H1 (cell line): ENCODE measurements at regions of chr14 and their contacts with region 1.

Region 1: GRCh38 chr14:28375295-28375694 is 391.3 kb upstream of the FOXG1 start:
- DNase-seq: peak; percentile 25 to 54
- H3K4me3 ChIP-seq: no peak overlapping the region
- H3K27ac ChIP-seq: no peak overlapping the region
- H3K4me1 ChIP-seq: no peaks in the 10 kb centered on the region
- H3K27me3 ChIP-seq: no peaks in the 10 kb centered on the region
- CTCF ChIP-seq: peak in 2 of 3 experiments; percentile 69 to 78; a peak in 3 of 4 replicates
- EP300 ChIP-seq: no peak
- POLR2A ChIP-seq: no peak
- RAD21 ChIP-seq: peak; percentile 66 to 73

Region 2: GRCh38 chr14:28280997-28281598 is 94.2 kb before region 1 on chr14:
- CTCF ChIA-PET with region 1: no interaction called
- POLR2A ChIA-PET with region 1: no interaction called
- DNase-seq: no peak
- H3K4me3 ChIP-seq: no peak overlapping the region
- H3K27ac ChIP-seq: no peak overlapping the region
- H3K4me1 ChIP-seq: no peaks in the 10 kb centered on the region
- H3K27me3 ChIP-seq: no peaks in the 10 kb centered on the region
- CTCF ChIP-seq: no peak
- EP300 ChIP-seq: no peak
- POLR2A ChIP-seq: no peak
- RAD21 ChIP-seq: no peak

Region 3: DNA sequence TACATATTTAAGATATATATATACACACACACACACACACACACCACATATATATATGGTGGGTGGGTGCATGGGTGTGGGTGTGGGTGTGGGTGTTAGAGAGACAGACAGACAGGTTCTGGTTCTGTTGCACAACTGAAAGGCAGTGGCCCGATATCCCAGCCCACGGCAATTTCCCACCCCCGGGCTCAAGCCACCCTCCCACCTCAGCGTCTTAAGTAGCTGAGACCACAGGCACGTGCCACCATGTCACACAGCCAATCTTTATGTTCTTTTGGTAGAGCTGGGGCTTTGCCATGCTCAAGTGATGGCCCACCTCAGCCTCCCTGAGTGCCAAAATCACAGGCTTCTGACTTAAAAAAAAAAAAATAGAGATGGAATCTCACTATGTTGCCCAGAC is 26.5 kb before region 1 on chr14:
- CTCF ChIA-PET with region 1: interaction called, 12 read pairs
- POLR2A ChIA-PET with region 1: no interaction called
- DNase-seq: no peak
- H3K4me3 ChIP-seq: no peak overlapping the region
- H3K27ac ChIP-seq: no peak overlapping the region
- H3K4me1 ChIP-seq: no peaks in the 10 kb centered on the region
- H3K27me3 ChIP-seq: no peaks in the 10 kb centered on the region
- CTCF ChIP-seq: no peak
- EP300 ChIP-seq: no peak
- POLR2A ChIP-seq: no peak
- RAD21 ChIP-seq: no peak

Region 4: GRCh38 chr14:28608851-28609828 is 233.8 kb after region 1 on chr14:
- CTCF ChIA-PET with region 1: interaction called, 14 read pairs
- POLR2A ChIA-PET with region 1: no interaction called
- DNase-seq: peak; percentile 17 to 76
- H3K4me3 ChIP-seq: no peak overlapping the region
- H3K27ac ChIP-seq: no peak overlapping the region
- H3K4me1 ChIP-seq: no peaks in the 10 kb centered on the region
- H3K27me3 ChIP-seq: no peaks in the 10 kb centered on the region
- CTCF ChIP-seq: peak in 2 of 3 experiments; percentile 73 to 85; a peak in 3 of 4 replicates
- EP300 ChIP-seq: no peak
- POLR2A ChIP-seq: no peak
- RAD21 ChIP-seq: peak; percentile 95